PC-3 (cell line): ENCODE measurements at regions of chr1 and their contacts with region 1.

Region 1: GRCh38 chr1:70354332-70355110 is at the start of gene ANKRD13C:
- DNase-seq: peak; percentile 95
- ATAC-seq: peak; percentile 80
- H3K4me3 ChIP-seq: peak within 1 kb of the TSS; percentile 94
- H3K27ac ChIP-seq: peak within 1 kb of the TSS; percentile 92
- H3K4me1 ChIP-seq: peaks cover 53% of the 10 kb centered on the region
- H3K27me3 ChIP-seq: no peaks in the 10 kb centered on the region
- CTCF ChIP-seq: no peak
- total RNA-seq, gene ANKRD13C: 38.0 and 41.5 TPM in 2 replicates

Region 2: GRCh38 chr1:70221241-70222121 is 133.0 kb before region 1 on chr1 and contains the start of gene SRSF11:
- CTCF ChIA-PET with region 1: no interaction called
- POLR2A ChIA-PET with region 1: interaction called, 9 read pairs
- intact Hi-C with region 1: loop called (anchors 5 kb)
- DNase-seq: peak; percentile 95
- ATAC-seq: peak; percentile 97
- H3K4me3 ChIP-seq: peak within 1 kb of the TSS; percentile 99
- H3K27ac ChIP-seq: peak within 1 kb of the TSS; percentile 86
- H3K4me1 ChIP-seq: peaks cover 20% of the 10 kb centered on the region
- H3K27me3 ChIP-seq: no peaks in the 10 kb centered on the region
- CTCF ChIP-seq: no peak
- total RNA-seq, gene SRSF11: 98.7 and 112 TPM in 2 replicates

Region 3: GRCh38 chr1:70331962-70332361 is 22.6 kb before region 1 on chr1:
- CTCF ChIA-PET with region 1: no interaction called
- POLR2A ChIA-PET with region 1: no interaction called
- intact Hi-C with region 1: loop called (anchors 2 kb)
- DNase-seq: peak; percentile 76
- ATAC-seq: peak; percentile 89
- H3K4me3 ChIP-seq: no peak overlapping the region
- H3K27ac ChIP-seq: peak overlapping the region; percentile 48
- H3K4me1 ChIP-seq: peaks cover 50% of the 10 kb centered on the region
- H3K27me3 ChIP-seq: no peaks in the 10 kb centered on the region
- CTCF ChIP-seq: no peak

Region 4: DNA sequence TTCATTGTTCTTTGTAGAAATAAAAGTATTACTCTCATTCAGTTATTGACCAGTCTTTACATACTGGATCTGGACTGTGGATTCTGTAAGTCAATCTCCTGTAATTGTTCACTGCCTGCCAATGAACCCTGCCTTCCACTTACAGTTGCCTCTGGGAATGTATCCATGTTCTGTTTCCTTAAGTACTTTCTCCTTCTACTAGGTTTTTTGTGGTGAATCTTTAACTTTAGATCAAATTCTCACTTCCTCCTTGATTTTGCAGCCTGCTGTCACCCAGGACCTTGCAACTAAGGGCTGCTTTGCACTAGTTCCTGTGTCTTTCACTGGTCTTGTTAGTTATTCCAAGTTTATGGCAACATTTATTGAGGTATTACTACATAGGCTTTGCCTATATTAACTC is 28.2 kb after region 1 on chr1:
- CTCF ChIA-PET with region 1: no interaction called
- POLR2A ChIA-PET with region 1: no interaction called
- intact Hi-C with region 1: loop called (anchors 2 kb)
- DNase-seq: no peak
- ATAC-seq: no peak
- H3K4me3 ChIP-seq: no peak overlapping the region
- H3K27ac ChIP-seq: no peak overlapping the region
- H3K4me1 ChIP-seq: peaks cover 23% of the 10 kb centered on the region
- H3K27me3 ChIP-seq: no peaks in the 10 kb centered on the region
- CTCF ChIP-seq: no peak

Region 5: GRCh38 chr1:70427976-70428375 is 73.5 kb after region 1 on chr1:
- CTCF ChIA-PET with region 1: no interaction called
- POLR2A ChIA-PET with region 1: no interaction called
- intact Hi-C with region 1: loop called (anchors 1 kb)
- DNase-seq: peak; percentile 11
- ATAC-seq: no peak
- H3K4me3 ChIP-seq: no peak overlapping the region
- H3K27ac ChIP-seq: no peak overlapping the region
- H3K4me1 ChIP-seq: peaks cover 40% of the 10 kb centered on the region
- H3K27me3 ChIP-seq: no peaks in the 10 kb centered on the region
- CTCF ChIP-seq: no peak